ENCODE measurements at regions of chr11 and their contacts with region 1.

Region 1: DNA sequence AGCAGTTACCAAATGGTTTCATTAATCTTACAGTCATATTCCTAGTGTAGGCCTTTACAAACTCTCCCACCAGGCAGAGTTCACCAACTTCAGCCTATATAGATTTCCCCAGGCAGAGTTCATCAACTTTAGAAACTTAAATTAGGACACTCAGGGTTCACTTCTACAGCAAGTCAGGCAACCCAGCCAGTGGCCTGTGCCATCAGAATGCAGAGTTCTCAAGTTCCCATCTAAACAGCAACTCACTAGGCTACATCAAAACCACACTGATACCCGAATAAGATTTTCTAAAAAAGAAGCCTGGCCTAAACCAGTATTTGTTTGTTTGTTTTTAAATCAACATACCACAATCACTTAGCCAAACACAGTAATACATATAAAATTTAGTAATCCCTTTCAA is 33.7 kb downstream of the PICALM start:
- DNase-seq: no peak
- ATAC-seq: no peak
- H3K4me3 ChIP-seq: no peak overlapping the region
- H3K27ac ChIP-seq: no peak overlapping the region
- H3K4me1 ChIP-seq: peaks cover 10 to 36% of the 10 kb centered on the region in 2 donors
- H3K27me3 ChIP-seq: no peaks in the 10 kb centered on the region
- CTCF ChIP-seq: no peak

Region 2: DNA sequence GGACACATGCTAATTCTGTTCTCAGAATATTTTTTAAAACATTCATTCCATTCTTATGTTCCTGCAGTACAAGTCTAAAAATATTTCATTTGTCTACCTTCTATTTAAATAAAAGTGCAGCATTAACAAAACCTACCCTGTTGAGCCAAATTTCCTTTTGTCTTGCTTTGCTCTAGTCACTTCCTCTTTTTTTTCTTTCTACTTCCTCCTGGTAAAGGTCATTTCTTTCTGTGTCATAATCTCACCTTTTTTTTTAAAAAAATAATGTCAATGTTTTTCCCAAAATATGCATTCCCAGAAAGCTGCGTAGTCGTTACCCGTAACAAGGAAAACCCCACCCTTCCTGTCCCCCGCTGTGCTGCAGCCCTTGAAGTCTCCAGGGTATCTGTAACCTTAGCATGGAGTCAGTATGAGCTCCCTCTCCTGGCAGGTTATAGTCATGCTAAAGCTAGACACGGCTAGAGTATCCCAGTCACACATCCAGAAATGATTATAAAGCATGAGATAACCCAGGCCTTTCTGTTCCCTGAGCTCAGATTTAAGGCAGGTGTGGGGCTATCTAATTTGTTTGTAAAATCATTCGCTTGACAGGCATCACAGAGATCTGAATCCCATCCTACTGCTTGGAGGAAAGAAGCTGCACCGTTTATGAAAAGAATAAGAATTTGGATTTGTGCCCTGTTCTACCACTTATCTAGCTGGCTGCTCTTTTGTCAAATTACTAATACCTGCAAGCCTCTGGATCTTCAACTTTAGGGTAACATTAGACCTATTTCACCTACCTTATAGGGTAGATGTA is 158.3 kb after region 1 on chr11:
- intact Hi-C with region 1: loop called in 1 of 2 experiments (anchors 10 kb)
- DNase-seq: peak in 2 of 4 donors; percentile 59 to 64
- ATAC-seq: peak; percentile 99
- H3K4me3 ChIP-seq: peak overlapping the region in 1 of 2 donors; percentile 25
- H3K27ac ChIP-seq: peak overlapping the region; percentile 68 to 89
- H3K4me1 ChIP-seq: peaks cover 12 to 46% of the 10 kb centered on the region in 2 donors
- H3K27me3 ChIP-seq: no peaks in the 10 kb centered on the region
- CTCF ChIP-seq: peak; percentile 68 to 76

Measured in left lung (tissue), 14 donors.